Lower leg skin (tissue), 4 donors: ENCODE measurements at regions of chr16 and their contacts with region 1.

Region 1: DNA sequence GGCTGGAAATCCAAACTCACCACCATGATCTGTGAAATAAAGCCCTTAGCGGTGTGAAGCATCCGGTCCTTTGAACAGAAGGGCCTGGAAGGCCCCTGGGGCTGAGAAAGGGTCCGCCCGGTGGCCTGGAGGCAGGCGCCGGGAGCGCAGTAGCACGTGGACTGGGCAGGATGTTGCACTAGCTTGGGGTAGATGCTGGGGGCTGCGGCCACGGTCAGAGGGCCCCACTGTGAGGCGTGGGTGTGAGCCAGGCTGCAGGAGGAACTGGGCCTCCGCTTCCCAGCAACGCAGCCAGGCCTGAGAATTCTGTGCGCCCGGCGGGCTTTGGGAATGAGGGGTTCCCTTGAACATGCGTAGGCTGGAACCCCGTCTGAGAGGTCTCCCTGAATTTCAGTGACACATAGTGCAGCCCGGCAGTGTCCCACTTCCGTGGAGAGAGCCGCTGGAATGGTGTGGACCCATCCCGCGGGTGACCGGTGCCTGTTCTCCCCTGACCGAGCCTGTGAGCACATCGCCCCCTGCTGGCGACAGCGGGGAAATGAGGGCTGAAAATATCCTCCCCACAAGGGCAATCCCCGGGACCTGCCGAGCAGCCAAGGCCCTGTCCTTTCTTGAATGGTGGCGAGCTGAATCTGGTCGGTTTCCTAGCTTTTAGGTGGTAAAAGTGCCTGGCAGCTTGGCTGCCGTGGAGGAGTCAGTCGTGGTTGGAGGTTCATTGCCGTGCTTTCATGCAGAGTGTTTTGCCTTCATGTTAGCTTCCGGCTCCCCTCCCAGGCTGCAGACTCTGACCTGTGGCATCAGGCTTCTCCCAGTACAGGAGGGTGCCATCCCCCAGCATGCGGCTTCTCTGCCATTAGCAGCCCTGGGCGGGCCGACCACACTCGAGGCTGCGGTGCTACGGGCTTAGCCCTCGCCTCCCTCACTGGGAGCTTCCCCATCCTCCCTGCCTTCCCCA is 43.8 kb downstream of the DNAJA2 start:
- DNase-seq: peak; percentile 26 to 93
- H3K4me3 ChIP-seq: no peak overlapping the region
- CTCF ChIP-seq: no peak
- POLR2A ChIP-seq: no peak

Region 2: DNA sequence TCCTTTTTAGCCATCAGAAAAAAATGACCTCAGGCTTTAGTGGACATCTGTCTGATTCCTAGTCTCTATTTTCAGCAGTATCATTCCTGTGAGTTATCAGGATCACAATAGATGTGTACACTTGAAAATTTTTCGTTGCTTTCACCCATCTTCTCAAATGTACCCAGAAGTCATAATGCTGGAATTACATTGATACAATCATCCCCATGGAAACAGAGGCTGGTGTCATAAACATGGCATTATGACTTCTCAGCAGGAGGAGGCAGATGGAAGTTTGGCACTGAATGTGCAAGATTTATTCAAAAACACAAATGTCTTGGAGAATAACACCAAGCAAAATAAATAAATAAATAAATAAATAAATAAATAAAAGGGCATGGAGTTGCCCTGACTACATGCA is 824.0 kb after region 1 on chr16:
- intact Hi-C with region 1: loop called (anchors 10 kb)
- DNase-seq: no peak
- H3K4me3 ChIP-seq: no peak overlapping the region
- CTCF ChIP-seq: no peak
- POLR2A ChIP-seq: no peak